Astrocyte of the cerebellum (primary cell): ENCODE measurements at regions of chr3 and their contacts with region 1.

Region 1: DNA sequence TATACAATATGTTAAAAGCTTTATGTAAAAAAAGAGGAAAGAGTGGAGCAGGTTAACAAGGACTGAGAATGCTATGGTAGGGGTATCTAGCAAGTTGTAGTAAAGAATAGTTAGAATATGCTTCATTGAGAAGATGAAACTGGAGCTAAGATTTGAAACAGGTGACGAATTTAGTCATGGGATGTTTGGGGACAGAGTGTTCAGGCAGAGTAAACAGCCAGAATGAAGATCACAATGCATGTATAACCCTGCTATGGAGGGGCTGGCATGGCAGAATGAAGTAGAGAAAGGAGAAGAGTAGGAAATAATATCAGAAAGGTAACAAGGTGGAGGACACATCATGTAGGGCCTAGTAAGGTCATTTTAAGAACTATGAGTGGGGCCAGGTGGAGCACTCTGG is 72.0 kb downstream of the BTD start:
- DNase-seq: no peak
- H3K4me3 ChIP-seq: no peak overlapping the region
- CTCF ChIP-seq: no peak

Region 2: DNA sequence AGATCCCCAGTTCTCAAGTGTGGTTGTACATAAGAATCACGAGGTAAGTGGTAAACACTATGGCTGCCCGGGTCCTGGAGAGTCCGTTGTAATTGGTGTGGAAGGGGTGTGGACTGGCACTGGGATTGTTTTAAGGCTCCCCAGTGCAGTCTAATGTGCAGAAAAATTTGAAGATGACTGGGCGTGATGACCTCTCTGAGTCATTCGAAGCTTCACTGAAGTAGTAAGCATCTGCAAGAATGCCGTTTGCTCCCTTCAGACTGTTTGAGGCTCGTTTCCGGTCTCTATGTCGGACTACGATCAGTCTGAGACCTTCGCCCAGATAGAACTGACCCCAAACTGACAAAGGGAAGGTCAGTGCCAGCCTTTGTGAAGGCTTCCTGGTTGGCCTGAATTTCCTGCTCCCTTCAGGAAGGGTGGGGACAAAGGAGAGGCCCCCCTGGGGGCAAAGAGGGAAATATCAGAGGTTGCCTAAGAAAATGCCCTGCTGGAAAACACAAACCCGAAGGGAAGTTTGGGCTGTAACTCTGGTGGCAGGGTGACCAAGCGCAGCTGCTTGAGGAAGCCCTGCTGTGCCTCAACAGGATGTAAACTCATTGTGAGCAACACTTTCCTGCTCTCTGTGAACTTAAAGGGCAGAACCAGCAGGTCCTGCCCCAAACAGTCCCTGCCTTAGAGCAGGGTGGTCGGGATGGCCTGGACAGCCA is 37.4 kb before region 1 on chr3:
- in situ Hi-C with region 1: loop called (anchors 5 kb)
- DNase-seq: peak; percentile 75
- H3K4me3 ChIP-seq: no peak overlapping the region
- CTCF ChIP-seq: no peak

Region 3: GRCh38 chr3:15708882-15709677 is 35.5 kb after region 1 on chr3:
- in situ Hi-C with region 1: no loop called
- DNase-seq: no peak
- H3K4me3 ChIP-seq: no peak overlapping the region
- CTCF ChIP-seq: no peak

Region 4: GRCh38 chr3:15722877-15723620 is 49.5 kb after region 1 on chr3:
- in situ Hi-C with region 1: no loop called
- DNase-seq: no peak
- H3K4me3 ChIP-seq: no peak overlapping the region
- CTCF ChIP-seq: no peak